A673 (cell line): ENCODE measurements at regions of chr7 and their contacts with region 1.

Region 1: GRCh38 chr7:151448261-151449252 is 8.6 kb upstream of the CRYGN start:
- DNase-seq: peak; percentile 77
- H3K4me3 ChIP-seq: peak overlapping the region; percentile 58
- H3K27ac ChIP-seq: peak overlapping the region; percentile 67
- H3K4me1 ChIP-seq: peaks cover 4% of the 10 kb centered on the region
- H3K27me3 ChIP-seq: no peaks in the 10 kb centered on the region
- CTCF ChIP-seq: peak; percentile 84

Region 2: DNA sequence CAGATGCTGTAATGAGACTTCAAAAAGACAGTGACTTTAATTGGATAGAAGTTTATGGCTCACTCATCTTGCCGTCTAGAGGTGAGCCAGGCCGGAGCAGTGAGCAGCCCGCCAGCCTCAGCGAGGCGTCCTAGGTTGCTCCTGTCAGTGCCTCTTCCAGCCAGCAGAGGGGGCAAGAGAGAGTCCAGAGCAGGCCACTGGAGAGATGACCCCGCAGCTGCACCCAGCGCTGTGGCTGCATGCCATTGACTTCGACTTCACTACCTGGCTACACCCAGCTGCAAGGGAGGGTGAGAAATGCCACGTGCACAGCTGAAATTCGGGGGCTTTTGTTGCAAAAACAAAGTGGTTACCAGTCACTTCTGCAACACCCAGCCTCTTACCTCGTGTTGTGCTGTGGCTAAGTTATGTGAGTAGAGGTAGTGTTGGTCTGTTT is 80.4 kb before region 1 on chr7:
- CTCF ChIA-PET with region 1: interaction called, 9 read pairs
- POLR2A ChIA-PET with region 1: interaction called, 3 read pairs
- intact Hi-C with region 1: loop called (anchors 1 kb)
- DNase-seq: peak; percentile 70
- H3K4me3 ChIP-seq: no peak overlapping the region
- H3K27ac ChIP-seq: no peak overlapping the region
- H3K4me1 ChIP-seq: no peaks in the 10 kb centered on the region
- H3K27me3 ChIP-seq: no peaks in the 10 kb centered on the region
- CTCF ChIP-seq: peak; percentile 88